Psoas muscle (tissue), 8 donors: ENCODE measurements at regions of chr3 and their contacts with region 1.

Region 1: GRCh38 chr3:128282380-128283196 is 129.3 kb downstream of the EEFSEC start:
- DNase-seq: peak; percentile 76 to 77
- ATAC-seq: peak; percentile 76 to 87 (median 86)
- H3K4me3 ChIP-seq: no peak overlapping the region
- H3K27ac ChIP-seq: peak overlapping the region; percentile 41
- H3K4me1 ChIP-seq: peaks cover 13% of the 10 kb centered on the region
- H3K27me3 ChIP-seq: no peaks in the 10 kb centered on the region
- CTCF ChIP-seq: no peak

Region 2: GRCh38 chr3:127299276-127299675 is 983.3 kb before region 1 on chr3:
- intact Hi-C with region 1: loop called in 1 of 2 experiments (anchors 10 kb)
- DNase-seq: peak in 1 of 2 donors; percentile 10
- ATAC-seq: peak in 3 of 4 donors; percentile 8 to 41 (median 22)
- H3K4me3 ChIP-seq: no peak overlapping the region
- H3K27ac ChIP-seq: no peak overlapping the region
- H3K4me1 ChIP-seq: no peaks in the 10 kb centered on the region
- H3K27me3 ChIP-seq: no peaks in the 10 kb centered on the region
- CTCF ChIP-seq: no peak

Region 3: DNA sequence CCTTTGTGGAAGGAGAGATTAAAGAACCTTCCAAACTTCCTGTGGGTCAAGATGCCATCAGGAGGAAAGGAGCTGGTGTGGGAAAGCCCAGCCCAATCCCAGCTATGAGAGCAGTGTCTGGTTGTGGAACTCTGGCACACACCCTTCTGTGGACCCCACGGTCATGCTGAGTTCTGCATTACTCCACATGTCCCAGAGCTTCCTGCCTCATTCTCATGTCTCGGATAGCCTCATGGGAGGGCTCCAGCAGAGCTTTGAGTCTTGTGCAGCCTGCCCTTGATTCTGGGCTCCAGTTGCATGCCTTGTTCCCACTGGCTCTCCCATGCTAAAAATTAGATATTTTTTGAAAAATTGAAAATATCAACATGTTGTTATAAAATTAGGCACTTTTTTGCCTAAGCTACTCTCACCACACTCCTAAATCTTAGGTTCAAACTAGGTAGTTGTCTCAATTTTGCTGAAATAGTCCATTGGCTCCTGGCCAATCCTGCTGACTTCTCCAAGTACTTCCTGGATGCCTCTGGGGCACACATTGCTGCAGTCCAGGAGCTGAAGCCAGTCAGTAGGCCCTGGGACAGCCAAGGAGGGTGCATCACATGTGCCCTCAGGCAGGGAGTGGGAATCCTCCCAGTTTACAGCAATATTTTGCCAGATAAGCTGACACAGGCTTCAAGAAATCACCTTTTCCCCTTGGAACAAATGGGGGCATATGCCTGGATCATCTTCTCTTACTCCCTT is 15.0 kb after region 1 on chr3:
- intact Hi-C with region 1: no loop called
- DNase-seq: no peak
- ATAC-seq: peak in 2 of 4 donors; percentile 45 to 53
- H3K4me3 ChIP-seq: no peak overlapping the region
- H3K27ac ChIP-seq: no peak overlapping the region
- H3K4me1 ChIP-seq: no peaks in the 10 kb centered on the region
- H3K27me3 ChIP-seq: no peaks in the 10 kb centered on the region
- CTCF ChIP-seq: no peak

Region 4: DNA sequence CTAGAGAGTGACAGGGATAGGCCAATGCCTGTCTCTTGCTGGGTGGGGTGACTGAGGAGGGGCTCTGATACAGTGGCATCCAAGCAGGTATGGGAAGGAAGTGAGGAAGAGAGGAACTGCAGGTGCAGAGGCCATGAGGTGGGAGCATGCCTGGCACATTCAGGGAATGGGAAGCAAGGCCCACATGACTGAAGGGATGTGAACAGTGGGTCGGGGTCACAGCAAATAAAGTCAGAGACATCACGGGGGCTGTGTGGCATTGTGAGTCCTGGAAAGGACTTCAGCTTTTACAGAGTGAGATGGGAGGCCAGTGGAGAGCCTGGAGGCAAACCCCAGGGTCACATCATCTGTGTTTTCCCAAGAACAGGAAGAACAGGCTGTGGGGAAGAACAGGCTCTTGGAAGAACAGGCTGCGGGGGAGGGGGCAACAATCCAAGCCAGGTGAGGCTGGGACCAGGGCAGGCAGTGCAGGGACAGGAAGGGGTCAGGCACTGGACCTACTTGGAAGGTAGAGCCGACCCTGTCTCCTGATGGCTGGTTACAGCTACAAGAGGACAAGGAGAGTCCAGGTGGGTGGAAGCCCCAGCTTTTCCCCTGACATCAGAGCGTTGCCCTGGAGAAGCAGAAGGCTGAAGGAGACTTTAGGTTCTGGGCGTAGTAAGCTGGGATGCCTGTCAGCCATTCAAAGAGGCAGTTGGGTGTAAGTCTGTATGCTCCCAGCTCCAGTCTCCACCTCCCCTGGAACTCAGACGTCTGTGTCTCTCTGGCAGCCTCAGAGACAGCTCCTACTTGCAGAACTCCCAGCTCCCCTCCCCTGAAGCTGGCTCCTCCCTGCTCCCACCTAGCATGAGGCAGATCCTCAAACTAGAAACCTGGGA is 53.0 kb after region 1 on chr3:
- intact Hi-C with region 1: no loop called
- DNase-seq: peak in 1 of 2 donors; percentile 29
- ATAC-seq: no peak
- H3K4me3 ChIP-seq: no peak overlapping the region
- H3K27ac ChIP-seq: no peak overlapping the region
- H3K4me1 ChIP-seq: peaks cover 10% of the 10 kb centered on the region
- H3K27me3 ChIP-seq: no peaks in the 10 kb centered on the region
- CTCF ChIP-seq: no peak